ENCODE measurements at regions of chr2 and their contacts with region 1.

Region 1: GRCh38 chr2:72892506-72893173 is 5.4 kb downstream of the SPR start:
- DNase-seq: peak; percentile 73
- ATAC-seq: peak; percentile 80 to 81

Region 2: DNA sequence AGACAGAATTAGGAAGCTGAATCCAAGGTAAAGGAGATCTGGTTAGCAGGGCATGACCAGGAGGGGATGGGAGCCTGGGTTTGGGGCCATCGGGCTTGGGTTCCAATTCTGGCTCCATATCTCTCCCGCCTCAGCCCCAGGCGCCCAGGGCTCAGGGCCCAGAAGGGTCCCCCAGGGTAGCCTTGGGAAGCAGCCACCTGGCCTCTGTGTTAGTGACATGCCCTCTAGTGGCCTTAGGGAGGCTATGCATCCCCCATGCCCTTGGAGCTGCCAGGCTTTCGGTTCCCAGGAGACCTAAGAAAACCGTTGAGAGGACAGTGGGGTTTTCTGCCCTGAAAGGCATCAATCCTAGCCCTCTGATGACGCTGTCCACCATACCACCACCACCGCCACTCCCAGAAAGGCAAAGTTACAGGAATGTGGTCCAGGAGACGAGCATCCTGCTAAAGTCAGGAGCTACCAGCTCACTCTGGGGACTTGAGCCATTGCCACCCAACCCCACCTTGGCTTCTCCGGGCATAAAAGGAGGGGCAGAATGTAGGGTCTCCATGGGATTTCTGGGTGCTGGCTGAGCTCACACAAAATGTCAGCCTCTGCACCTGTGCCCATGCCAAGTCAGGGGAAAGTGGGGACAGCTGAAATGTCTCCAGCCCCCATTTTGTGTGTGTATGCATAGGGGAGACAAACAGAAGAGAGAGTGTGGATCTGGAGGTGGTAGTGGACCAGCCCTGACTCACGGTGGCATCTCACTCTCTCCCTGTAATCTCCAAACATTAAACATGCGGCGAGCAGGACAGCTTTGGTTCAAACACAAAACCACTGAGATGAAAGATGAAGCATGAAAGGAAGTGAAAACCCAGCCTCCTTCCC is 81.2 kb after region 1 on chr2:
- intact Hi-C with region 1: loop called (anchors 5 to 10 kb)
- DNase-seq: no peak
- ATAC-seq: peak; percentile 76 to 79

Region 3: GRCh38 chr2:73071360-73072133 is 178.9 kb after region 1 on chr2 and contains the start of gene SFXN5:
- intact Hi-C with region 1: loop called (anchors 10 kb)
- DNase-seq: peak; percentile 98
- ATAC-seq: peak; percentile 97
- total RNA-seq, gene SFXN5: 9.0 to 10.5 TPM

Region 4: DNA sequence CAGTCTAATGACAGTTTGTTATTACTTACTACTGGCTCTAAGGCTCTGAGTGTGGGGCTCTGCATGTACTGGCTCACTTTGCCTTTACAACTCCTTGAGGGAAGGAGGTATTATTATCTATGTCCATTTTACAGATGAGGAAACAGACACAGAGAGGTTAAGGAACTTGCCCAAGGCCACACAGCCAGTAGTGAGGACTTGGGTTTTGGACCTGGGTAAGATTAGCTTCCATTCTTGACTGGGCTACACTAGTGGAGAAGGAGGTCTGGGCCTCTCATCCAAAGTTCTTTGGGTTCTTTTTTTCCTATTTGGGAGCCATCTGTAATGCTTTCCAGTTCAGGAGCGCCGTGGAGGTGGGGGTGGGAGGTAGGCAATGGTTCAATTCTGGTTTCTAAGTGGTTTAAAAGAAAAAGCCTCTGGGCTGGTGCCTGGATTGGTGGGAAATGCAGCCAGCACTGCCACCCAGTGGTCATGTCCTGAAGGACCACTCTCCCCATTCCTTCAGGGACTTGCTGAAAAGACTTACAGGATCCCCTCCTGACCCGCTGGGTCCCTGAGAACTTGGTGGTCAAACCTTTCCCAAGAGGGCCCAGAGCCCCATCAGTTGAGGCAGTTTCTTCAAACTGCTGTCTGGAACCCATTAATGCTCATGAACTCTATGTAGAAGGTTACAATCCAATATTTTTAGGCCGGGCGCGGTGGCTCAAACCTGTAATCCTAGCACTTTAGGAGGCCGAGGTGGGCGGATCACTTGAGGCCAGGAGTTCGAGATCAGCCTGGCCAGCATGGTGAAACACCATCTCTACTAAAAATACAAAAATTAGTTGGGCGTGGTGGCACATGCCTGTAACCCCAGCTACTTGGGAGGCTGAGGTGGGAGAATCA is 271.1 kb after region 1 on chr2:
- intact Hi-C with region 1: loop called (anchors 2 to 5 kb)
- DNase-seq: peak; percentile 64
- ATAC-seq: peak; percentile 86

Measured in left cardiac atrium (tissue), 4 donors.